Activated B cell treated with CpG ODN at 0.5 μM for 24 hours (primary cell): ENCODE measurements at regions of chr2 and their contacts with region 1.

Region 1: GRCh38 chr2:99180755-99181623 is at the starts of genes MITD1 and MRPL30:
- DNase-seq: peak; percentile 83
- ATAC-seq: peak; percentile 94
- H3K4me3 Mint-ChIP-seq: peak within 1 kb of the TSS; percentile 99
- H3K27ac Mint-ChIP-seq: peak within 1 kb of the TSS; percentile 95
- H3K4me1 Mint-ChIP-seq: peaks cover 63% of the 10 kb centered on the region
- H3K27me3 Mint-ChIP-seq: no peaks in the 10 kb centered on the region
- CTCF ChIP-seq: no peak
- total RNA-seq, gene MITD1: 54.1 and 59.8 TPM in 2 replicates
- total RNA-seq, gene MRPL30: 18.6 and 21.4 TPM in 2 replicates

Region 2: DNA sequence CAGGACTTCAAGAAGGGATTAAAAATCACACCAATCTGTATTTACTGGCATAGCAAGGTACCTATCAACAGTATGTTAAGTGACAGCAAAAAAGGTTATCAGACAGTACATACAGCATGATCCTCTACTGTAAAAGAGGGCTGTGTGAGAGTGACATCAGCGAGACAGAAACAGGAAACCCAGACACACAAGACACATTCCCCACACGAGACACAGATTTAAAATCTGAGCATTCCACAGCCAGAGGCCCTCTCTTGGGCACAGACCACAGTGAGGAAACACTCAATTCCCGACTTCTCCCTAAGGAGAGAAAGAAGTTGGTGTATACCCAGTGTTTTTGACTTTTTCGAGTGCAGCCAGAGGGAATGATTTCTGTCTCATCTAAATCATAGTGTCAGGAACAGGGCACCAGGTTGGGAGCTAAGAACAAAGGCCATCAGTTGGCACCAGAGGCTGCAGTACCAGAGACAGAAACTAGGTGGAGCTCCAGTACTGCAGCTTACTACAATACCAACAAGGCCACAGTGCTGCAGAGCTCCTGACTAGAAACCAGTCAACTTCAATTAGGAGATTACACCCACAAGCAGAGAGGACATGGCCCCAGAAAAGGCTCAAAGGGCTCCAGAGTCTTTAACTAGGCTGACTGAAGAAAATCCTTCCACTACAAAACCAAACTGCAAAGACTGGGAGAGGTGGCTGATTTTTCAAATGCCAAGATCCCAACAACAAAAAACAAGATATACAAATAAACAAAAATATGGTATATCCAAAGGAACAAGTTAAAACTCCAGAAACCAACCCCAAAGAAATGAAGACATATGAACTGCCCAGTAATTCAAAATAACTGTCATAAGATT is 531.6 kb before region 1 on chr2:
- CTCF ChIA-PET with region 1: interaction called, 6 read pairs
- POLR2A ChIA-PET with region 1: interaction called, 3 read pairs
- intact Hi-C with region 1: loop called (anchors 1 kb)
- DNase-seq: peak; percentile 46
- ATAC-seq: peak; percentile 99
- H3K4me3 Mint-ChIP-seq: no peak overlapping the region
- H3K27ac Mint-ChIP-seq: peak overlapping the region; percentile 18
- H3K4me1 Mint-ChIP-seq: peaks cover 19% of the 10 kb centered on the region
- H3K27me3 Mint-ChIP-seq: no peaks in the 10 kb centered on the region
- CTCF ChIP-seq: peak; percentile 99

Region 3: GRCh38 chr2:98835831-98836385 is 345.1 kb before region 1 on chr2:
- CTCF ChIA-PET with region 1: no interaction called
- POLR2A ChIA-PET with region 1: no interaction called
- intact Hi-C with region 1: loop called (anchors 2 kb)
- DNase-seq: no peak
- ATAC-seq: peak; percentile 18
- H3K4me3 Mint-ChIP-seq: no peak overlapping the region
- H3K27ac Mint-ChIP-seq: no peak overlapping the region
- H3K4me1 Mint-ChIP-seq: peaks cover 6% of the 10 kb centered on the region
- H3K27me3 Mint-ChIP-seq: no peaks in the 10 kb centered on the region
- CTCF ChIP-seq: no peak

Region 4: DNA sequence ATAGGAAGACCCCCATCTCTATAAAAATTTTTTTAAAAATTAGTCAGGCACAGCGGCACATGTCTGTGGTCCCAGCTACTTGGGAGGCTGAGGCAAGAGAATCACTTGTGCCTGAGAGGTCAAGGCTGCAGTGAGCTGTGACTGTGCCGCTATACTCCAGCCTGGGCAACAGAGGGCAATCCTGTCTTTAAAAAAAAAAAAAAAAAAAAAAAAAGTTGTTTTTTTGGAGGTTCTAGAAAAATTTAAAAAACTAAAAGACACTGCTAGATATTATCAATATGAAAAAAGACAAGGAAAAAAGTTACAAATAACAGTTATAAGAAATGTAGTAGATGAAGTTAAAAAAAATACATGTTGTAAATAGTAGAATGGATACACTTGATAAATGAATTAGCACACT is 95.6 kb before region 1 on chr2:
- CTCF ChIA-PET with region 1: interaction called, 4 read pairs
- POLR2A ChIA-PET with region 1: no interaction called
- intact Hi-C with region 1: loop called (anchors 1 kb)
- DNase-seq: no peak
- ATAC-seq: no peak
- H3K4me3 Mint-ChIP-seq: no peak overlapping the region
- H3K27ac Mint-ChIP-seq: no peak overlapping the region
- H3K4me1 Mint-ChIP-seq: no peaks in the 10 kb centered on the region
- H3K27me3 Mint-ChIP-seq: peaks cover 3% of the 10 kb centered on the region
- CTCF ChIP-seq: no peak

Region 5: DNA sequence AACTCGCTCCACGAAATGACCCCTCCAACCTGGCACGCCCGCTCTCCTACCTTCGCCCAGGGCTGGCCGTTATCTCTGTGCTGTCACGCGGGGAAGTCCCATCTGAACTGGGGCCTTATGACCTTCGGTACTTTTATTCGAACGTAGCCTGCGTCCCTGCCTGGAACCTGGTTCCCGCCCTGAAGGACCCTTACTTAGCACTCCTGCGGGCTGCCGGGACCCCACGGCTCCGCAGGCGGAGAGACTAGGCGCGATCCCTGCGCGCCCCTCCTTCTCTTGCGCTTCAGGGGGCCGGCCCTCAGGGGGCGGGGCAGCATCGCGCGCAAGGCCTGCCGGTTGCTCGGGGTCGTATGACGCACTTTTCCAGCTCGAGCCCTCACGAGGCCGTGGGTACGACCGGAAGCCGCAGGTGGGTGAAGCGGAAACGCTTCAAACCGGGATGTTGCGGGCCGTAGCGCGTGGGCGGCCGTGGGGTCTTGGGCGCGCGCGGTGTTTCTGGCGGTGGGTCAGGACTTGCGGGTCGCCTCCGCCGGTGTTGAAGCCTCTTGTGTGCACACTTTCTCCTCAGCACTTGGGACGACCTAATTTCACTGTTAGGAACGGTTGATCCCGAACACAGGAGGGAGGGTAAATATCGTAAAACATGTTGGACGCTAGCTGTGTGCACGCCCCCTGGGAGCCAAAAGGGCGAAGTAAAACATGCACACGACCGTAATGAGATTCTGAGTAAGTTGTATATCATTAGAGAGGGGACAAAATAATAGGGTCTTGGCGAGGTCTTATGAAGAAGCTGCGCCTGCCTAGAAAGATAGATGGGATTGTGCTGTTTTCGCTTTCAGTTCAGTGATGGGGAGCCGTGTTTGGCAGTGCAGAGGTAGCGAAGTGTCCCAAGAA is 26.1 kb before region 1 on chr2 and contains the starts of genes LIPT1 and TSGA10:
- CTCF ChIA-PET with region 1: interaction called, 3 read pairs
- POLR2A ChIA-PET with region 1: interaction called, 46 read pairs
- intact Hi-C with region 1: loop called (anchors 1 kb)
- DNase-seq: peak; percentile 92
- ATAC-seq: peak; percentile 91
- H3K4me3 Mint-ChIP-seq: peak within 1 kb of the TSS; percentile 90
- H3K27ac Mint-ChIP-seq: peak within 1 kb of the TSS; percentile 92
- H3K4me1 Mint-ChIP-seq: peaks cover 55% of the 10 kb centered on the region
- H3K27me3 Mint-ChIP-seq: no peaks in the 10 kb centered on the region
- CTCF ChIP-seq: no peak
- total RNA-seq, gene LIPT1: 15.1 and 18.1 TPM in 2 replicates
- total RNA-seq, gene TSGA10: 18.5 and 20.4 TPM in 2 replicates